MCF 10A (cell line): ENCODE measurements at regions of chr3 and their contacts with region 1.

Region 1: GRCh38 chr3:141875374-141875892 is 1.0 kb upstream of the ATP1B3 start:
- DNase-seq: peak; percentile 86
- H3K4me3 Mint-ChIP-seq: peak overlapping the region; percentile 91
- H3K27ac Mint-ChIP-seq: peak overlapping the region; percentile 83
- H3K4me1 Mint-ChIP-seq: peaks cover 14% of the 10 kb centered on the region
- H3K27me3 Mint-ChIP-seq: no peaks in the 10 kb centered on the region
- CTCF ChIP-seq: peak; percentile 87

Region 2: GRCh38 chr3:141575879-141576743 is 299.3 kb before region 1 on chr3:
- CTCF ChIA-PET with region 1: interaction called, 3 read pairs
- POLR2A ChIA-PET with region 1: interaction called, 6 read pairs
- intact Hi-C with region 1: loop called (anchors 10 kb)
- DNase-seq: peak; percentile 8
- H3K4me3 Mint-ChIP-seq: no peak overlapping the region
- H3K27ac Mint-ChIP-seq: peak overlapping the region; percentile 44
- H3K4me1 Mint-ChIP-seq: peaks cover 9% of the 10 kb centered on the region
- H3K27me3 Mint-ChIP-seq: no peaks in the 10 kb centered on the region
- CTCF ChIP-seq: peak; percentile 42

Region 3: GRCh38 chr3:141782454-141782853 is 93.0 kb before region 1 on chr3:
- CTCF ChIA-PET with region 1: interaction called, 4 read pairs
- POLR2A ChIA-PET with region 1: no interaction called
- intact Hi-C with region 1: loop called (anchors 1 kb)
- DNase-seq: peak; percentile 60
- H3K4me3 Mint-ChIP-seq: no peak overlapping the region
- H3K27ac Mint-ChIP-seq: peak overlapping the region; percentile 36
- H3K4me1 Mint-ChIP-seq: peaks cover 7% of the 10 kb centered on the region
- H3K27me3 Mint-ChIP-seq: no peaks in the 10 kb centered on the region
- CTCF ChIP-seq: peak; percentile 18

Region 4: DNA sequence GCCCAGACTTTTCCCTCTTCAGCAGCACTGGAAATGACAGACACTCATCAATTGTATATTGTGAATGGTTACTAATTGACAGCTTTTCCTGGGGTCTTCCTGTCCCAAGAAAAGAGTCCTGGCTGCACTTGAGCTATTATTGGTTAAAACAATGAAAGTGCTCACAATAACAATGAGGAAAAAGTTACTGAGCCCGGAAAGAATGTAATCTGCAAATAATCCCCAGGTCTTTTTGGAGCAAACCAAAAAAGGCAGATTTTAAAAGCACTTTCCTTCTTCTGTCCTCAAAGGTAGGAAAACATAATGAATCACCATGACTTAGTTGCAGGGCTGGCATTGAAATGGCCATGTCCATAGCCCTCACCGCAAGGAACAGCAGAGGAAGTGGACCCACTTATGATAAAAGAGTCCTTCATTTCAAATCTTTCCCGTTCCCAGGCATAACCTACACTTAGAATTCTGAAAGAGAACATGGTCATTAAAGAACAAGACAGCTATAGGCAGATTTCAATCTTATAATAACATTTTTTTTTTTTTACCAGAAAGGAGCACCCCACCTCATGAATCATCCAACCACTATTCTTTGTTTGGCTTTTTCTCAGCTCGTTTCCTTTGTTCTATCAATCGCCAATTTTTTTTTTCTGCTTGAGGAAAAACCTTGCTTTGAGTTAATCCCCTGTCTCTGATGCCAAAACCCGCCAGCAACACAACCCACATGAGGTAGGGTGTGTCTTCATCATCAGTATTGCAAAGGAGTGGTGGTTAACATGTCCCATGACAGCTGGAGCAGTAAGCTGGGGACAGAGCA is 34.5 kb before region 1 on chr3:
- CTCF ChIA-PET with region 1: interaction called, 7 read pairs
- POLR2A ChIA-PET with region 1: interaction called, 15 read pairs
- intact Hi-C with region 1: no loop called
- DNase-seq: peak; percentile 82
- H3K4me3 Mint-ChIP-seq: peak overlapping the region; percentile 53
- H3K27ac Mint-ChIP-seq: peak overlapping the region; percentile 92
- H3K4me1 Mint-ChIP-seq: peaks cover 14% of the 10 kb centered on the region
- H3K27me3 Mint-ChIP-seq: no peaks in the 10 kb centered on the region
- CTCF ChIP-seq: no peak

Region 5: DNA sequence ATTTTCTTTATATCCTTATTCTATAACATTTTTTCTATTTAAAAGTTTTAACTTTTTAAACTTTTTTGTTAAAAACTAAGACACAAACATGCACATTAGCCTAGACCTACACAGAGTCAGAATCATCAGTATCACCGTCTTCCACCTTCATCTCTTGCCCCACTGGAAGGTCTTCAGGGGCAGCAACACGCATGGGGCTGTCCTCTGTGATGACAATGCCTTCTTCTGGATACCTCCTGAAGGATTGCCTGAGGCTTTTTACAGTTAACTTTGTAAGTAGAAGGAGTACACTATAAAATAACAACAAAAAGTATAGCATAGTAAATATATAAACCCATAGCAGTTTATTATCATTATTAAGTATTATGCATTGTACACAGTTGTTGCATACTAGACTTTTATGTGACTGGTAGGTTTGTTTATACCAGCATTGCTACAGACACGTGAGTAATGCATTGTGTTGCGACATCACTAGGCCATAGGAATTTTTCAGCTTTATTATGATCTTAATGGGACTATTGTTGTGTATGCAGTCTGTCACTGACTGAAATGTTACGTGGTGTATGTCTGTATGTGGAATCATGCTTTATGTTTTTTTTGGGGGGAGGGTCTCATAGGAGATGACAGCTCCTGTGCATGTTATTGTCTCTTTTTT is 19.2 kb after region 1 on chr3:
- CTCF ChIA-PET with region 1: interaction called, 9 read pairs
- POLR2A ChIA-PET with region 1: interaction called, 18 read pairs
- intact Hi-C with region 1: no loop called
- DNase-seq: peak; percentile 84
- H3K4me3 Mint-ChIP-seq: no peak overlapping the region
- H3K27ac Mint-ChIP-seq: peak overlapping the region; percentile 87
- H3K4me1 Mint-ChIP-seq: peaks cover 37% of the 10 kb centered on the region
- H3K27me3 Mint-ChIP-seq: no peaks in the 10 kb centered on the region
- CTCF ChIP-seq: no peak

Region 6: DNA sequence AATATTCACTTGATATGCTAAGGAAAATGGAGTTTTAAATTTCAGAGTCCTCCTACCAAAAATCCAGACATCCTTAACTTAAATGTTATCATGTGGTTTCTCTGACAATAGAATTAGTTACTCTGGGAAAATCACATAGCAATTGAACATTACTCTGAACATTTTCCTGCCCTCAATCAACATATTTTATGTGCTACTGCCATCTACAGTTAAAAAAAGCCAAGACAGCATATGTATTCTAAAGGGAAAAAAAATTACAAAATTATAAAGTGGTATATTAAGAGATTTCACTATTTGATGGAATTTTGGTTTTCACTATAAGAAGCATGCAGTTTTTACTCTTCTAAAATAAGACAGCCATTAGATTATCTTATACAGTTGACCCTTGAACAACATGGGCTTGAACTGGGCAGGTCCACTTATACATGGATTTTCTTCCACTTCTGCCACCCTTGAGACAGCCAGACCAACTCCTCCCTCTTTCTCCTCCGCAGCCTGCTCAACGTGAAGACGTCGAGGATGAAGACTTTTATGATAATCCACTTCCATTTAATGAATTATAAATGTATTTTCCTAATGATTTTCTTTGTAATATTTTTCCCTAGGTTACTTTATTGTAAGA is 123.3 kb after region 1 on chr3:
- CTCF ChIA-PET with region 1: no interaction called
- POLR2A ChIA-PET with region 1: interaction called, 3 read pairs
- intact Hi-C with region 1: loop called (anchors 1 kb)
- DNase-seq: peak; percentile 23
- H3K4me3 Mint-ChIP-seq: no peak overlapping the region
- H3K27ac Mint-ChIP-seq: no peak overlapping the region
- H3K4me1 Mint-ChIP-seq: no peaks in the 10 kb centered on the region
- H3K27me3 Mint-ChIP-seq: no peaks in the 10 kb centered on the region
- CTCF ChIP-seq: peak; percentile 35